ENCODE measurements at regions of chr3 and their contacts with region 1.

Region 1: GRCh38 chr3:27699067-27699466 is 23.1 kb downstream of the EOMES start:
- DNase-seq: no peak
- H3K4me3 ChIP-seq: no peak overlapping the region
- H3K27ac ChIP-seq: no peak overlapping the region
- H3K4me1 ChIP-seq: no peaks in the 10 kb centered on the region
- H3K27me3 ChIP-seq: no peaks in the 10 kb centered on the region
- CTCF ChIP-seq: no peak
- EP300 ChIP-seq: no peak
- POLR2A ChIP-seq: no peak

Region 2: GRCh38 chr3:28317438-28318022 is 618.5 kb after region 1 on chr3:
- intact Hi-C with region 1: loop called in 1 of 4 experiments (anchors 5 kb)
- DNase-seq: no peak
- H3K4me3 ChIP-seq: no peak overlapping the region
- H3K27ac ChIP-seq: no peak overlapping the region
- H3K4me1 ChIP-seq: no peaks in the 10 kb centered on the region
- H3K27me3 ChIP-seq: no peaks in the 10 kb centered on the region
- CTCF ChIP-seq: peak in 1 of 3 donors; percentile 20
- EP300 ChIP-seq: no peak
- POLR2A ChIP-seq: no peak

Measured in ovary (tissue), 10 donors.